ENCODE measurements at regions of chr15 and their contacts with region 1.

Region 1: DNA sequence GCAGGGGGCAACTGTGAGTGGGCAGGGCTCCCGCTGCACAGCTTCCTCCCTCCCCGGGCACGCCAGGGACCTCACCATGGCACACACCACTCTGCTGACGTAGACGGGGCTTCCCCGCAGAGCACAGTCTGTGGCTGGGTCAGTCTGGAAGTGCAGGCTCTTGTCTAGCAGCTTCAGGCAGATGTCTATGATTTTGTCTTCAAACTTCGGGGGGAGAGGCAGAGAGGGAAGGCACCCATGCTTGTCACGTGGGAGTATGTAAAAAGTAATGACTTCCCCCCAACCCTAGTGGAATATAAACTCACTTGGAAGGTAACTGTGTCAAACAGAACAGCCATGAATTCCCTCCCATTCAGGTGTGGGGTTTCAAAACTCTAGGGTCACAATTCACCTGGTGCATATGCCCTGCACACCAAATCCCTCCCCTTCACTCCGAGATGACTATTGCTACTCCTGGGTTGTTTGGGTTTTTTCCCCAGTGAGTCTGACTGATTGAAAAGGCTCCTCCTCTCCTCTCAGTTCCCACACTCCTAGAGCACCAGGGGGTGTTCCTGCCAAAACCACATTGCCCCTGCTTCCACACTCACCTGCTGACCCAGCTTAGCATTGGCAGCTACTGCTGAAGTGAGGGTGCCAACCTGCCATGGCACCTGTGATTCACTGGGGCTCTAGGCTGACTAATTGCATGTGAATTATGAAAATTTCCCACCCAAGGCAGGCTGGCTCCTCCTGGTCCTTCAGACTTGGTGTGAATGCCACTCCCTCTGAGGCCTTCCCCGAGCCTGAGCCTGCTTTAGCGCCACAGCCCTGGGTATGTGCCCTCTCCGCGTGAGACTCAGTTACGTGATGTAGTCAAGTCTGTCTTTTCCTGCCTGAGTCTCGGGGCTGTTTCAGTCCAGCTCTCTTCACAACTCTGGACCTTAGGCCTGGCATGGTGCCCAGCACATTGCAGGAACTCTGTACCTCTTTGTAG is 13.0 kb downstream of the TGM5 start:
- DNase-seq: peak; percentile 89
- ATAC-seq: peak; percentile 72
- H3K4me3 ChIP-seq: no peak overlapping the region
- H3K27ac ChIP-seq: peak overlapping the region; percentile 68
- H3K4me1 ChIP-seq: peaks cover 46% of the 10 kb centered on the region
- H3K27me3 ChIP-seq: no peaks in the 10 kb centered on the region
- CTCF ChIP-seq: no peak
- EP300 ChIP-seq: peak; percentile 8 to 41; a peak in 1 of 4 replicates
- POLR2A ChIP-seq: 0 out of 2 replicates have a peak, but pooled peaks have one; percentile 18
- RAD21 ChIP-seq: no peak

Region 2: GRCh38 chr15:43230640-43231115 is 23.0 kb before region 1 on chr15:
- CTCF ChIA-PET with region 1: interaction called, 518 read pairs
- POLR2A ChIA-PET with region 1: interaction called, 4 read pairs
- RAD21 ChIA-PET with region 1: interaction called, 76 read pairs
- SMC1A ChIA-PET with region 1: interaction called, 46 read pairs
- in situ Hi-C with region 1: no loop called
- intact Hi-C with region 1: loop called (anchors 1 kb)
- DNase-seq: no peak
- ATAC-seq: no peak
- H3K4me3 ChIP-seq: no peak overlapping the region
- H3K27ac ChIP-seq: no peak overlapping the region
- H3K4me1 ChIP-seq: no peaks in the 10 kb centered on the region
- H3K27me3 ChIP-seq: no peaks in the 10 kb centered on the region
- CTCF ChIP-seq: no peak
- EP300 ChIP-seq: no peak
- POLR2A ChIP-seq: no peak
- RAD21 ChIP-seq: no peak

Region 3: DNA sequence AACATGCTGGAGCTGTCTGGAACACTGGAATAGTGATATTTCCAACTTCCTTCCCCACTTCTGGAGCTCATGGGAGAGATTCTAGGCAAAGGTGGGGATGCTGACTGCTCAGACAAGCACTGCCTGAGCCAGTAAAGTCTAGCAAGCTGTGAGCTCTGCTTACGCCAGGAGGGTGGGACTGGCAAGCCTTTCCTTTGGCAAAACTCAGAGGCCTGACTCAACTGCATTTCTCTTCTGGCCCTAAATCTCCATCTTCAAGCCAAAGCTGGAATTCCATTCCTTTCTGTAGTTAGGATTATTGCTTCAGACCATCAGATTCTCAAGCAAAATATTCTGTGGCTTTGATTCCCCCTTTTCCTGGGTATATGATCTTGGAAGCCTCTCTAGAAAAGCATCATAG is 12.6 kb before region 1 on chr15:
- CTCF ChIA-PET with region 1: interaction called, 8 read pairs
- POLR2A ChIA-PET with region 1: interaction called, 25 read pairs
- RAD21 ChIA-PET with region 1: interaction called, 19 read pairs
- SMC1A ChIA-PET with region 1: interaction called, 20 read pairs
- in situ Hi-C with region 1: no loop called
- intact Hi-C with region 1: loop called (anchors 1 kb)
- DNase-seq: no peak
- ATAC-seq: no peak
- H3K4me3 ChIP-seq: no peak overlapping the region
- H3K27ac ChIP-seq: no peak overlapping the region
- H3K4me1 ChIP-seq: peaks cover 17% of the 10 kb centered on the region
- H3K27me3 ChIP-seq: no peaks in the 10 kb centered on the region
- CTCF ChIP-seq: no peak
- EP300 ChIP-seq: no peak
- POLR2A ChIP-seq: no peak
- RAD21 ChIP-seq: no peak

Region 4: GRCh38 chr15:43268111-43269105 is 14.7 kb after region 1 on chr15:
- CTCF ChIA-PET with region 1: interaction called, 25 read pairs
- POLR2A ChIA-PET with region 1: interaction called, 6 read pairs
- RAD21 ChIA-PET with region 1: interaction called, 37 read pairs
- SMC1A ChIA-PET with region 1: interaction called, 28 read pairs
- in situ Hi-C with region 1: no loop called
- intact Hi-C with region 1: no loop called
- DNase-seq: no peak
- ATAC-seq: peak; percentile 90
- H3K4me3 ChIP-seq: no peak overlapping the region
- H3K27ac ChIP-seq: no peak overlapping the region
- H3K4me1 ChIP-seq: no peaks in the 10 kb centered on the region
- H3K27me3 ChIP-seq: no peaks in the 10 kb centered on the region
- CTCF ChIP-seq: peak; percentile 32 to 88 (median 64); a peak in 5 of 6 replicates
- EP300 ChIP-seq: no peak
- POLR2A ChIP-seq: no peak
- RAD21 ChIP-seq: peak; percentile 88

Region 5: GRCh38 chr15:43274136-43274535 is 20.4 kb after region 1 on chr15:
- CTCF ChIA-PET with region 1: interaction called, 25 read pairs
- POLR2A ChIA-PET with region 1: interaction called, 10 read pairs
- RAD21 ChIA-PET with region 1: interaction called, 37 read pairs
- SMC1A ChIA-PET with region 1: interaction called, 28 read pairs
- in situ Hi-C with region 1: no loop called
- intact Hi-C with region 1: no loop called
- DNase-seq: no peak
- ATAC-seq: no peak
- H3K4me3 ChIP-seq: no peak overlapping the region
- H3K27ac ChIP-seq: no peak overlapping the region
- H3K4me1 ChIP-seq: no peaks in the 10 kb centered on the region
- H3K27me3 ChIP-seq: no peaks in the 10 kb centered on the region
- CTCF ChIP-seq: no peak
- EP300 ChIP-seq: no peak
- POLR2A ChIP-seq: no peak
- RAD21 ChIP-seq: no peak

Region 6: GRCh38 chr15:43346305-43346704 is 92.6 kb after region 1 on chr15:
- CTCF ChIA-PET with region 1: no interaction called
- POLR2A ChIA-PET with region 1: no interaction called
- RAD21 ChIA-PET with region 1: no interaction called
- SMC1A ChIA-PET with region 1: no interaction called
- in situ Hi-C with region 1: no loop called
- intact Hi-C with region 1: no loop called
- DNase-seq: no peak
- ATAC-seq: no peak
- H3K4me3 ChIP-seq: no peak overlapping the region
- H3K27ac ChIP-seq: no peak overlapping the region
- H3K4me1 ChIP-seq: no peaks in the 10 kb centered on the region
- H3K27me3 ChIP-seq: no peaks in the 10 kb centered on the region
- CTCF ChIP-seq: peak in 2 of 3 experiments; percentile 8 to 23; a peak in 3 of 6 replicates
- EP300 ChIP-seq: no peak
- POLR2A ChIP-seq: no peak
- RAD21 ChIP-seq: peak; percentile 27; the same call in 1 of the 2 replicates

Region 7: GRCh38 chr15:43845421-43845820 is 591.7 kb after region 1 on chr15:
- CTCF ChIA-PET with region 1: no interaction called
- POLR2A ChIA-PET with region 1: no interaction called
- RAD21 ChIA-PET with region 1: no interaction called
- SMC1A ChIA-PET with region 1: no interaction called
- in situ Hi-C with region 1: no loop called
- intact Hi-C with region 1: no loop called
- DNase-seq: no peak
- ATAC-seq: no peak
- H3K4me3 ChIP-seq: no peak overlapping the region
- H3K27ac ChIP-seq: no peak overlapping the region
- H3K4me1 ChIP-seq: no peaks in the 10 kb centered on the region
- H3K27me3 ChIP-seq: no peaks in the 10 kb centered on the region
- CTCF ChIP-seq: no peak
- EP300 ChIP-seq: no peak
- POLR2A ChIP-seq: no peak
- RAD21 ChIP-seq: no peak